MCF 10A (cell line): ENCODE measurements at regions of chr20 and their contacts with region 1.

Region 1: GRCh38 chr20:10721137-10721896 is 47.5 kb upstream of the JAG1 start:
- DNase-seq: no peak
- H3K4me3 Mint-ChIP-seq: no peak overlapping the region
- H3K27ac Mint-ChIP-seq: no peak overlapping the region
- H3K4me1 Mint-ChIP-seq: peaks cover 5% of the 10 kb centered on the region
- H3K27me3 Mint-ChIP-seq: no peaks in the 10 kb centered on the region
- CTCF ChIP-seq: no peak

Region 2: GRCh38 chr20:10731190-10731965 is 10.1 kb after region 1 on chr20:
- CTCF ChIA-PET with region 1: interaction called, 10 read pairs
- POLR2A ChIA-PET with region 1: interaction called, 10 read pairs
- intact Hi-C with region 1: no loop called
- DNase-seq: peak; percentile 33
- H3K4me3 Mint-ChIP-seq: no peak overlapping the region
- H3K27ac Mint-ChIP-seq: peak overlapping the region; percentile 21
- H3K4me1 Mint-ChIP-seq: peaks cover 18% of the 10 kb centered on the region
- H3K27me3 Mint-ChIP-seq: no peaks in the 10 kb centered on the region
- CTCF ChIP-seq: no peak